ENCODE measurements at regions of chr18 and their contacts with region 1.

Region 1: DNA sequence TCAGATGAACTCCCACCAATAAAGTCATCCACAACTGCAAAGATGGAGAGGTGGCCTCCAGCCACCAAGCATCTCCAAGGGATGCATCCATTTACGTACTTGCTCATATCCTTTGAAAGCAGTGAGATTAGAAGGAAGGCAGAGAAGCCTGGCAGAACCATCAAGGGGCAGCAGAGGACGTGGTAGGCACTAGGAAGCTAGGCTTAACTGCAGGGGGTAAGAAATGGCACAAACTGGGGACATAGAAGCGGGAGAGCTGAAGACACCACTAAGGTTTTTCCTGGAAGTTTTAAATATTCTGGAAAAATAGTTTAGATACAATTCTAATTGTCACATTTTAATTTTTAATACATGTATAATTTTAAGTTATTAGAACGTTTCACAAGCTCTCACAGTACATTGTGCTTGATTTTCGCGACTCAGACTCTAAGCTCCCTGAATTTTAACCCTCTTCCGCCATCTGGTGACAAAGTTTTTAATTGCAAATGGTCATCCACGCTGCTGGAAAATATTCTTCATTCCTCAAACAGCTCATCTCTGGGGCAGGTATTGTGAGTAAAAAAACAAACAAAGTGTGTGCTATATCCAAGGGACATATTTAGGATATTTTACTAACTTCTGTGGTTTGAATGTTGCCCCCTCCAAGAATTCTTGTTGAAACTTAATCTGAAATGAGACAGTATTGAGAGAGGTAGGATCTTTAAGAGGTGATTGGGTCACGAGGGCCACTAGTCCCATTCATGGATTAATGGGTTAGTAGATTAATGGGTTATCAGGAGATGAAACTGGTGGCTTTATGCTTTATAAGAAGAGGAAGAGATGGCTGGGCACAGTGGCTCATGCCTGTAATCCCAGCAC is 1.6 kb upstream of the PSTPIP2 start:
- DNase-seq: peak; percentile 75
- ATAC-seq: peak; percentile 45
- H3K4me3 Mint-ChIP-seq: no peak overlapping the region
- H3K27ac Mint-ChIP-seq: no peak overlapping the region
- H3K4me1 Mint-ChIP-seq: peaks cover 32% of the 10 kb centered on the region
- H3K27me3 Mint-ChIP-seq: no peaks in the 10 kb centered on the region

Region 2: DNA sequence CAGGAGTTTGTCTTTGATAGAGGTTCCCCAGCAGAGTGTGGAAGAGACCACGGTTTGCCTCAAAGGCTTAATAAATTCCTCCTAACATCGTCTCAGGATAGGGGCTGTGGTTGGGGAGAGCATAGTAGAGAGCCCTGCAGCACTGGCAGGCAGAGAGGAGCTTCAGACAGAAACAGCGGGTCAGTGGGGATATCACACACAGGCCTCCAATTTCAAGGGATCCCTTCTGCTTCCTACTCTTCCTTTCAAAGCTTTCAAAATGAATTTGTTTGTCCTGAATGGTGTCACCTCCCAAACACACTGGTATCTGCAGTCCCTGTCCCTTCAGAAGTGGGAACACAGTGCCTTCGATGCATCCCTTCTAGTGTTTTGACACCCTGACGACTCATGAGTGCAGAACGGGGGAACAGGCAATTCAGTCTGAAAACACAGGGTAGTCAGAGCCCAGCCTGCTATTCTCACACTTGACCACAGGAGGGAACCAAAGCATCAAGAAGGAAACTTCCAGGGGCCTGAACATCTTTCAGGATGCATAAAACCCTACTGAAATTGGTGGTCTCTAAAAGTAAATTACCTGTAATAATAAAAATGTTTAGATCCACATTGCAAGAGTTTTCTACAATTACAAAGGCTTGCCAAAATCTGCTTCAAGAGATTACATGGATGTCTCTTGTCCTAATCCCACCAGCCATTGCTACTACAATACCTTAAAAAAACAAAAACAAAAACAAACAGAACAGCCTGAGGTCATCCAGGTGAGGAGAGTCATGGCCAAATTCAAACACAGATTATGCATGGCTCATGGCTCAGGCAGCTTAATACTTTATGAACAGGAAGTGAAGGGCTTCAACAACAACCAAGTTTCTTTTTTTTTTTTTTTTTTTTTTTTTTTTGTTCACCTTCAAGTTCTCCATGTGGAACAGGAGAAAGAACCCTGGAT is 408.6 kb before region 1 on chr18:
- CTCF ChIA-PET with region 1: interaction called, 69 read pairs
- POLR2A ChIA-PET with region 1: no interaction called
- DNase-seq: peak; percentile 81
- ATAC-seq: peak; percentile 38
- H3K4me3 Mint-ChIP-seq: peak overlapping the region; percentile 34
- H3K27ac Mint-ChIP-seq: peak overlapping the region; percentile 85
- H3K4me1 Mint-ChIP-seq: peaks cover 53% of the 10 kb centered on the region
- H3K27me3 Mint-ChIP-seq: no peaks in the 10 kb centered on the region

Region 3: GRCh38 chr18:45730832-45731575 is 342.7 kb before region 1 on chr18:
- CTCF ChIA-PET with region 1: no interaction called
- POLR2A ChIA-PET with region 1: no interaction called
- DNase-seq: no peak
- ATAC-seq: no peak
- H3K4me3 Mint-ChIP-seq: no peak overlapping the region
- H3K27ac Mint-ChIP-seq: no peak overlapping the region
- H3K4me1 Mint-ChIP-seq: no peaks in the 10 kb centered on the region
- H3K27me3 Mint-ChIP-seq: no peaks in the 10 kb centered on the region

Region 4: GRCh38 chr18:45910405-45911023 is 163.2 kb before region 1 on chr18:
- CTCF ChIA-PET with region 1: interaction called, 25 read pairs
- POLR2A ChIA-PET with region 1: no interaction called
- DNase-seq: peak; percentile 76
- ATAC-seq: peak; percentile 87
- H3K4me3 Mint-ChIP-seq: no peak overlapping the region
- H3K27ac Mint-ChIP-seq: no peak overlapping the region
- H3K4me1 Mint-ChIP-seq: no peaks in the 10 kb centered on the region
- H3K27me3 Mint-ChIP-seq: no peaks in the 10 kb centered on the region

Region 5: GRCh38 chr18:45962461-45962860 is 111.2 kb before region 1 on chr18:
- CTCF ChIA-PET with region 1: interaction called, 12 read pairs
- POLR2A ChIA-PET with region 1: no interaction called
- DNase-seq: peak; percentile 37
- ATAC-seq: no peak
- H3K4me3 Mint-ChIP-seq: no peak overlapping the region
- H3K27ac Mint-ChIP-seq: peak overlapping the region; percentile 56
- H3K4me1 Mint-ChIP-seq: peaks cover 37% of the 10 kb centered on the region
- H3K27me3 Mint-ChIP-seq: no peaks in the 10 kb centered on the region

Region 6: DNA sequence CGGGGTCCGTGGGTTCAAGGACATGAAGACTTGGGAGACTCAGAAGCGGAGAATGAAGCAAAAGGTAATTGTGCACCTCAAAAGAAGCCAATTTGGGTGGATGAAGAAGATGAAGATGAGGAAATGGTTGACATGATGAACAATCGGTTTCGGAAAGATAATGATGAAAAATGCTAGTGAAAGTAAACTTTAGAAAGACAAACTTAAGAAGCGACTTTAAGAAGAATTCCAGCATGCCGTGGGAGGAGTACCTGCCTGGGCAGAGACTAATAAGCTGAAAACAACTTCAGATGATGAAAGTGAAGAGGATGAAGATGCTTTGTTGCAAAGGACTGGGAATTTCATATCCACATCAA is 45.2 kb before region 1 on chr18:
- CTCF ChIA-PET with region 1: interaction called, 11 read pairs
- POLR2A ChIA-PET with region 1: interaction called, 3 read pairs
- DNase-seq: no peak
- ATAC-seq: no peak
- H3K4me3 Mint-ChIP-seq: peak overlapping the region; percentile 79
- H3K27ac Mint-ChIP-seq: peak overlapping the region; percentile 62
- H3K4me1 Mint-ChIP-seq: peaks cover 7% of the 10 kb centered on the region
- H3K27me3 Mint-ChIP-seq: peaks cover 11% of the 10 kb centered on the region

Region 7: GRCh38 chr18:46060359-46060841 is 13.3 kb before region 1 on chr18:
- CTCF ChIA-PET with region 1: interaction called, 26 read pairs
- POLR2A ChIA-PET with region 1: interaction called, 3 read pairs
- DNase-seq: no peak
- ATAC-seq: no peak
- H3K4me3 Mint-ChIP-seq: no peak overlapping the region
- H3K27ac Mint-ChIP-seq: no peak overlapping the region
- H3K4me1 Mint-ChIP-seq: peaks cover 21% of the 10 kb centered on the region
- H3K27me3 Mint-ChIP-seq: no peaks in the 10 kb centered on the region

Region 8: GRCh38 chr18:46220116-46220515 is 146.4 kb after region 1 on chr18:
- CTCF ChIA-PET with region 1: no interaction called
- POLR2A ChIA-PET with region 1: no interaction called
- DNase-seq: no peak
- ATAC-seq: no peak
- H3K4me3 Mint-ChIP-seq: no peak overlapping the region
- H3K27ac Mint-ChIP-seq: no peak overlapping the region
- H3K4me1 Mint-ChIP-seq: peaks cover 64% of the 10 kb centered on the region
- H3K27me3 Mint-ChIP-seq: no peaks in the 10 kb centered on the region